OCI-LY7 (cell line): ENCODE measurements at regions of chr15 and their contacts with region 1.

Region 1: GRCh38 chr15:44711356-44712107 is at the start of gene B2M:
- DNase-seq: peak; percentile 96
- H3K4me3 ChIP-seq: peak within 1 kb of the TSS; percentile 89
- H3K27ac ChIP-seq: peak within 1 kb of the TSS; percentile 91
- H3K4me1 ChIP-seq: peaks cover 44% of the 10 kb centered on the region
- CTCF ChIP-seq: no peak
- total RNA-seq, gene B2M: 1,738 and 1,761 TPM in 2 replicates

Region 2: GRCh38 chr15:44426975-44427755 is 284.4 kb before region 1 on chr15 and contains the start of gene CTDSPL2:
- CTCF ChIA-PET with region 1: no interaction called
- POLR2A ChIA-PET with region 1: no interaction called
- intact Hi-C with region 1: loop called (anchors 5 kb)
- DNase-seq: peak; percentile 96
- H3K4me3 ChIP-seq: peak within 1 kb of the TSS; percentile 84
- H3K27ac ChIP-seq: peak within 1 kb of the TSS; percentile 93
- H3K4me1 ChIP-seq: peaks cover 30% of the 10 kb centered on the region
- CTCF ChIP-seq: no peak; the same call in 1 of the 2 replicates
- total RNA-seq, gene CTDSPL2: 138 and 218 TPM in 2 replicates

Region 3: GRCh38 chr15:44536962-44537734 is 174.4 kb before region 1 on chr15 and contains the start of gene EIF3J:
- CTCF ChIA-PET with region 1: no interaction called
- POLR2A ChIA-PET with region 1: no interaction called
- intact Hi-C with region 1: loop called (anchors 2 kb)
- DNase-seq: peak; percentile 95
- H3K4me3 ChIP-seq: peak within 1 kb of the TSS; percentile 83
- H3K27ac ChIP-seq: peak within 1 kb of the TSS; percentile 70
- H3K4me1 ChIP-seq: peaks cover 14% of the 10 kb centered on the region
- CTCF ChIP-seq: no peak
- total RNA-seq, gene EIF3J: 41.3 and 49.4 TPM in 2 replicates

Region 4: GRCh38 chr15:44663409-44664308 is 47.9 kb before region 1 on chr15 and contains the start of gene SPG11:
- CTCF ChIA-PET with region 1: interaction called, 3 read pairs
- POLR2A ChIA-PET with region 1: interaction called, 46 read pairs
- intact Hi-C with region 1: loop called (anchors 1 kb)
- DNase-seq: peak; percentile 99
- H3K4me3 ChIP-seq: peak within 1 kb of the TSS; percentile 79
- H3K27ac ChIP-seq: peak within 1 kb of the TSS; percentile 89
- H3K4me1 ChIP-seq: peaks cover 52% of the 10 kb centered on the region
- CTCF ChIP-seq: peak; percentile 83
- total RNA-seq, gene SPG11: 65.2 and 69.1 TPM in 2 replicates

Region 5: GRCh38 chr15:44728576-44729407 is 17.3 kb after region 1 on chr15:
- CTCF ChIA-PET with region 1: interaction called, 4 read pairs
- POLR2A ChIA-PET with region 1: interaction called, 116 read pairs
- intact Hi-C with region 1: loop called (anchors 1 kb)
- DNase-seq: peak; percentile 98
- H3K4me3 ChIP-seq: peak overlapping the region; percentile 81
- H3K27ac ChIP-seq: peak overlapping the region; percentile 90
- H3K4me1 ChIP-seq: peaks cover 56% of the 10 kb centered on the region
- CTCF ChIP-seq: no peak